SK-N-SH (cell line): ENCODE measurements at regions of chr17 and their contacts with region 1.

Region 1: DNA sequence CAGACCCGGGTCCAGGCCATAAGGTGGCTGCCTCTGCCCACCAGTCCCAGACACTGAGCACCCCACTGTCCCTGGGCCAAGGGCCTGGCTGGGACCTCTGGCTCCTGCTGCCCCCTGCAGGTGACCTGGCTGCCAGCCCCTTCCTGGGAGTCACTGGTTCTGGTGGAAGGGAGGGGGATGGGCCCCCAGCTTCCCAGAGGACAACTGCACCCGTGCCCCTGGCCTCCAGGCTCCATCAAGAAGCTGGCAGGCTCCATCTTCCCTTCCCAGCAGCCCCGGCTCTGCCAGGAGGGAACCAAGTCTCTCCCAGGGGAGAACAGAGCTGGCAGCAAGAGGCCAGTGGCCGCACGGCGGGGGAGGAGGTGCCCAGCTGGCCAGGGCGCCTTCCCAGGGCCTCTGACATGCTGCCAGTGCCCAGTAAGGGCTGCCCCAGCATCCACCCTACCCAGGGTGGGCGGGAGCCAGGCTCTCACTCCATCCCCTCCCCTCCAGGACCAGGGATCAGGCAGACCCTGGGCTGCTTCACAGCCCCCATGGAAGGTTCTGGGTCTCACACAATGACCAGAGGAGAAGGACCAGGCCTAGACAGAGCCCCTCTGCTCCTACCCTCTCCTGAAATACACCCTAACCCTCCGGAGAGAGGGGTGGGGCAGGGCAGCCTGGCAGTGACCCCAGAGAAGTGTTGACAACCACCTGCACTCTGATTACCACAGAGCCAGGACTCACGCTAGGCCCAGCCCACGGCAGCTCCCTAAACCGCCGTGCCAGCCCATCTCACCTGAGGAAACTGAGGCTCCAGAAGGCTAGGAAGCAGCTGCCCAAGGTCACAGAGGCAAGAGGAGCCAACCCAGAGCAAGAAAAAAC is 3.6 kb downstream of the CLUH start:
- DNase-seq: peak; percentile 83
- H3K4me3 ChIP-seq: peak overlapping the region in 1 of 2 experiments; percentile 26; a peak in 1 of 4 replicates
- H3K27ac ChIP-seq: no peak overlapping the region; a peak in 1 of 4 replicates
- H3K4me1 ChIP-seq: peaks cover 9 to 44% of the 10 kb centered on the region in 2 experiments; a peak in 1 of 4 replicates
- H3K27me3 ChIP-seq: no peaks in the 10 kb centered on the region
- CTCF ChIP-seq: peak; percentile 53
- EP300 ChIP-seq: no peak
- RAD21 ChIP-seq: peak; percentile 42; the same call in 1 of the 2 replicates

Region 2: DNA sequence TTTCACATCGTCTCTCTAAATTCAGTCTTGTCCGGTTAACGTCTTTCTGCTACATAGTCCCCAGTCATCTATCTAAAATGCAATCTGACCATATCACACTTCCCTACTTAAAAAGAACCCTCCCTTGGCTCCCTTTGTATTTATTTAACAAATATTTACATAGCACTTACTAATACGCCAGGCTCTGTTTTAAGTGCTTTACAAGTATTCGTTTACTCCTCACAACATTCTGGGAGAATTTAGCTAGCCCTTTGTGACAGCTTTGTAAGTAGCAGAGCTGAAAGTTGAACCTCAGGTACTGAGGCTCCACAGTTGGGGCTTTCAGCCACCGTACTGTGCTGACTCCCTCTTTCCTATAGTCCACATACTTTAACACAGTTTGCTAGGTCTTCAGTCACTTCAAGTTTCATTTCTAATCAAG is 105.3 kb before region 1 on chr17:
- CTCF ChIA-PET with region 1: no interaction called
- POLR2A ChIA-PET with region 1: no interaction called
- DNase-seq: no peak
- H3K4me3 ChIP-seq: no peak overlapping the region
- H3K27ac ChIP-seq: no peak overlapping the region
- H3K4me1 ChIP-seq: peaks cover 0 to 9% of the 10 kb centered on the region in 2 experiments; a peak in 1 of 4 replicates
- H3K27me3 ChIP-seq: no peaks in the 10 kb centered on the region
- CTCF ChIP-seq: no peak
- EP300 ChIP-seq: no peak
- RAD21 ChIP-seq: no peak

Region 3: DNA sequence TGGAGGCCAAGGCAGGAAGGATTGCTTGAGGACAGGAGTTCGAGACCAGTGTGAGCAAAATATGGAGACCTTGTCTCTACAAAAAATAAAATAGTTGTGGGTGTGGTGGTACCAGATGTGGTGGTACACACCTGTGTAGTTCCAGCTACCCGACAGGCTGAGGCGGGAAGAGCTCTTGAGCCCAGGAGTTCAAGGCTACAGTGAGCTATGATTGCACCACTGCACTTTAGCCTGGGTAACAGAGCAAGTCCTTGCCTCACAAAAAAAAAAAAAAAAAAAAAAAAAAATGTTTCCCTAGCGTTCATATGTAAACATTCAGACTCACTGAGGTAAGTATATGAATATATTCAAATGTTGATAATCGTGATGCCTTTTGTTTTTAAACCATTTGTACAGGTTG is 35.9 kb before region 1 on chr17:
- CTCF ChIA-PET with region 1: interaction called, 11 read pairs
- POLR2A ChIA-PET with region 1: no interaction called
- DNase-seq: no peak
- H3K4me3 ChIP-seq: no peak overlapping the region
- H3K27ac ChIP-seq: no peak overlapping the region
- H3K4me1 ChIP-seq: no peaks in the 10 kb centered on the region
- H3K27me3 ChIP-seq: no peaks in the 10 kb centered on the region
- CTCF ChIP-seq: no peak
- EP300 ChIP-seq: no peak
- RAD21 ChIP-seq: no peak

Region 4: GRCh38 chr17:2695961-2696760 is 11.8 kb before region 1 on chr17:
- CTCF ChIA-PET with region 1: interaction called, 12 read pairs
- POLR2A ChIA-PET with region 1: no interaction called
- DNase-seq: peak; percentile 32
- H3K4me3 ChIP-seq: no peak overlapping the region
- H3K27ac ChIP-seq: no peak overlapping the region
- H3K4me1 ChIP-seq: no peaks in the 10 kb centered on the region
- H3K27me3 ChIP-seq: no peaks in the 10 kb centered on the region
- CTCF ChIP-seq: no peak
- EP300 ChIP-seq: no peak
- RAD21 ChIP-seq: no peak

Region 5: GRCh38 chr17:2736956-2737355 is 29.0 kb after region 1 on chr17:
- CTCF ChIA-PET with region 1: no interaction called
- POLR2A ChIA-PET with region 1: no interaction called
- DNase-seq: peak; percentile 74
- H3K4me3 ChIP-seq: no peak overlapping the region
- H3K27ac ChIP-seq: no peak overlapping the region
- H3K4me1 ChIP-seq: peaks cover 0 to 2% of the 10 kb centered on the region in 2 experiments; a peak in 1 of 4 replicates
- H3K27me3 ChIP-seq: no peaks in the 10 kb centered on the region
- CTCF ChIP-seq: no peak
- EP300 ChIP-seq: no peak
- RAD21 ChIP-seq: no peak